Mammary epithelial cell (primary cell): ENCODE measurements at regions of chr12 and their contacts with region 1.

Region 1: GRCh38 chr12:89179983-89180382 is 172.3 kb downstream of the DUSP6 start:
- DNase-seq: peak; percentile 97
- H3K4me3 ChIP-seq: no peak overlapping the region
- H3K27ac ChIP-seq: peak overlapping the region; percentile 81
- H3K4me1 ChIP-seq: peaks cover 41% of the 10 kb centered on the region
- H3K27me3 ChIP-seq: no peaks in the 10 kb centered on the region
- CTCF ChIP-seq: no peak

Region 2: GRCh38 chr12:89067421-89068187 is 112.4 kb before region 1 on chr12:
- CTCF ChIA-PET with region 1: no interaction called
- dilution Hi-C with region 1: no loop called
- in situ Hi-C with region 1: no loop called
- intact Hi-C with region 1: loop called (anchors 5 kb)
- DNase-seq: peak; percentile 95
- H3K4me3 ChIP-seq: no peak overlapping the region
- H3K27ac ChIP-seq: peak overlapping the region; percentile 77
- H3K4me1 ChIP-seq: peaks cover 40% of the 10 kb centered on the region
- H3K27me3 ChIP-seq: no peaks in the 10 kb centered on the region
- CTCF ChIP-seq: no peak